PC-3 (cell line): ENCODE measurements at regions of chr16 and their contacts with region 1.

Region 1: GRCh38 chr16:68085259-68086071 is at the start of gene NFATC3:
- DNase-seq: peak; percentile 92
- ATAC-seq: peak; percentile 86
- H3K4me3 ChIP-seq: peak within 1 kb of the TSS; percentile 89
- H3K27ac ChIP-seq: no peak within 1 kb of the TSS
- H3K4me1 ChIP-seq: 0 out of 2 replicates have a peak, but pooled peaks cover 9% of the 10 kb centered on the region
- H3K27me3 ChIP-seq: no peaks in the 10 kb centered on the region
- CTCF ChIP-seq: no peak
- total RNA-seq, gene NFATC3: 12.1 and 14.5 TPM in 2 replicates

Region 2: DNA sequence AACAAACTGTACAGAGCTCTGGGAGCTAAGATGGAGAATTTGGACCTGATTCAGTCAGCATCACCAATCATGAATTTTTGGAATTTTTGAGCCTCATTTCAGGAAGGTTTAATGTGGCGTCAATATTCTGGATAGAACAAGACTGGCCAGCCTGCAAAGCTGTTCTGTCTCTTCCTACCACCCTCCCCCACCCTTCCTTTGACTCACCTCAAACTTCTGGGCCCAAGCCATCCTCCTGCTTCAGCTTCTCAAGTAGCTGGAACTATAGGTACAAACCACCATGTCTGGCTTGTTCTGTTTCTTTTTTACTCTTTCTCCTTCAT is 490.5 kb before region 1 on chr16:
- CTCF ChIA-PET with region 1: interaction called, 18 read pairs
- POLR2A ChIA-PET with region 1: no interaction called
- intact Hi-C with region 1: no loop called
- DNase-seq: peak; percentile 55
- ATAC-seq: peak; percentile 65
- H3K4me3 ChIP-seq: no peak overlapping the region
- H3K27ac ChIP-seq: no peak overlapping the region
- H3K4me1 ChIP-seq: peaks cover 11% of the 10 kb centered on the region
- H3K27me3 ChIP-seq: no peaks in the 10 kb centered on the region
- CTCF ChIP-seq: no peak

Region 3: GRCh38 chr16:67986949-67987348 is 98.5 kb before region 1 on chr16:
- CTCF ChIA-PET with region 1: no interaction called
- POLR2A ChIA-PET with region 1: interaction called, 10 read pairs
- intact Hi-C with region 1: no loop called
- DNase-seq: no peak
- ATAC-seq: no peak
- H3K4me3 ChIP-seq: no peak overlapping the region
- H3K27ac ChIP-seq: no peak overlapping the region
- H3K4me1 ChIP-seq: no peaks in the 10 kb centered on the region
- H3K27me3 ChIP-seq: no peaks in the 10 kb centered on the region
- CTCF ChIP-seq: no peak

Region 4: DNA sequence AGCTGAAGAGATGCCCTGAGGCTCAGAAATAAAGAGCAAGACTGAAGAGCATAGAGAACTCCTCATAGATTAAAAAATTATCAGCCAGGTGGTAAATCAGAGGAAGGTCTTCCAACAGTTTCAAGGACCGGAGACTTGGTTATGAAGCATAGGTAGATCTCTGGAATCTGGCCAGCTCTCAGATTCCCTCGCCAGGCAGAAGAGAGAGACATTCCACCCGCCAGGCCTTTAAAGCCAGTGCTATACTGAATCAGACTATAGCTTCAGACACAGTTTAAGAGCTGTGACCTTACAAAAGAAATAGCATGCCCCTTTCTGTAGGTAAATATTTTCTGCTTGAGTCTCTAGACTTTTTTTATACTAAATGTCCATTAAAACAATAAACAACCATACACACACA is 70.0 kb after region 1 on chr16:
- CTCF ChIA-PET with region 1: no interaction called
- POLR2A ChIA-PET with region 1: no interaction called
- intact Hi-C with region 1: no loop called
- DNase-seq: no peak
- ATAC-seq: no peak
- H3K4me3 ChIP-seq: no peak overlapping the region
- H3K27ac ChIP-seq: no peak overlapping the region
- H3K4me1 ChIP-seq: no peaks in the 10 kb centered on the region
- H3K27me3 ChIP-seq: no peaks in the 10 kb centered on the region
- CTCF ChIP-seq: no peak

Region 5: DNA sequence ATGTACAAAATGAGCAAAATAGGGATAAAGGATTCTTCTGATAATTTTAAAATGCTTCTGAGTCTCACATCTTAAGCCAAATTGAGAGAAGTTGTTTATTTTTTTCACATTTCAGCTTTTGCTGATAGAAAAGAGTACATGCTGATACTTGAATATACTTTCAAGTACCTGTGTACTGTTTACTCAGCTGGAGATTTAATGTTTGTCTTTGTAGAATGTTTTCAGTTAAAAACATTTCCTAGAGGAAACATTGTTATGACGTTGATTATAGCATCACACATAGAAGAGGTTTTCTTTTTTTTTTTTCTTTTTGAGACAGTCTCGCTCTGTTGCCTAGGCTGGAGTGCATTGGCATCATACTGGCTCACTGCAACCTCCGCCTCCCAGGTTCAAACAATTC is 130.8 kb after region 1 on chr16:
- CTCF ChIA-PET with region 1: no interaction called
- POLR2A ChIA-PET with region 1: interaction called, 13 read pairs
- intact Hi-C with region 1: no loop called
- DNase-seq: no peak
- ATAC-seq: no peak
- H3K4me3 ChIP-seq: no peak overlapping the region
- H3K27ac ChIP-seq: no peak overlapping the region
- H3K4me1 ChIP-seq: no peaks in the 10 kb centered on the region
- H3K27me3 ChIP-seq: no peaks in the 10 kb centered on the region
- CTCF ChIP-seq: no peak

Region 6: GRCh38 chr16:68237243-68238028 is 152.0 kb after region 1 on chr16:
- CTCF ChIA-PET with region 1: interaction called, 7 read pairs
- POLR2A ChIA-PET with region 1: no interaction called
- intact Hi-C with region 1: loop called (anchors 5 kb)
- DNase-seq: peak; percentile 96
- ATAC-seq: peak; percentile 63
- H3K4me3 ChIP-seq: peak overlapping the region; percentile 85
- H3K27ac ChIP-seq: peak overlapping the region; percentile 93
- H3K4me1 ChIP-seq: peaks cover 28% of the 10 kb centered on the region
- H3K27me3 ChIP-seq: no peaks in the 10 kb centered on the region
- CTCF ChIP-seq: no peak

Region 7: GRCh38 chr16:68264128-68265077 is 178.9 kb after region 1 on chr16 and contains the start of gene SLC7A6:
- CTCF ChIA-PET with region 1: no interaction called
- POLR2A ChIA-PET with region 1: no interaction called
- intact Hi-C with region 1: no loop called
- DNase-seq: peak; percentile 74
- ATAC-seq: peak; percentile 70
- H3K4me3 ChIP-seq: peak within 1 kb of the TSS; percentile 92
- H3K27ac ChIP-seq: peak within 1 kb of the TSS; percentile 63
- H3K4me1 ChIP-seq: peaks cover 14% of the 10 kb centered on the region; the same call in 1 of the 2 replicates
- H3K27me3 ChIP-seq: no peaks in the 10 kb centered on the region
- CTCF ChIP-seq: peak; percentile 57
- total RNA-seq, gene SLC7A6: 22.2 and 24.7 TPM in 2 replicates